ENCODE measurements at regions of chr3 and their contacts with region 1.

Region 1: DNA sequence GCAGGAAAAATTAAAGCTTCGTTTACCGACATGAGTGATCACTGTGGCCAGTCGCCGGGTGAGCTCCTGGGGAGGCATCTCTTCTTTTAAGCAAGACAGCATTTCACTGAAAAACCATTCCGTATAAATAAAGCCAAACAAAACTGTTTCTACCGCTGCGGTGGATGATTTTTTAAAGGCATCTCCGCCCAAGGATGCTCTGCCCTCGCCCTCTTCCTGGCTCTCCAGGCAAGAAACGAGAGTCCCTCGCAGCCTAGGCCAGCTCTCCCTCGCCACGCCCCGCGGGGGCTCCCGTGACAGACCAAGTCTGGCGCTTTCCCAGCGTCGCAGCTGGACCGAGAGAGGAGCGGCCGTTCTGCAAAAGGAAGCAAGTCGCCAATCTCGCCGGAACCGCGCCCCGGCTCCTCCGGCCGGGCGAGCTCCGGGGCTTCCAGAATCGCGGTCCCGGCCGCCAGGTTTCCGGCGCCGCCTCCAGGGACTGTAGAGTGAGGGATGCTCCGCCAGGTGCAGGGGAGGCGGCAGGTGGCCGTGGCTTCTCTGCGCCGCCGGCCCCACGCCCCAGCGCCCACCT is 458 bp downstream of the MCF2L2 start:
- DNase-seq: peak; percentile 24
- H3K4me3 Mint-ChIP-seq: peak overlapping the region; percentile 81
- H3K27ac Mint-ChIP-seq: peak overlapping the region; percentile 14
- H3K4me1 Mint-ChIP-seq: peaks cover 39% of the 10 kb centered on the region
- H3K27me3 Mint-ChIP-seq: peaks cover 8% of the 10 kb centered on the region

Region 2: DNA sequence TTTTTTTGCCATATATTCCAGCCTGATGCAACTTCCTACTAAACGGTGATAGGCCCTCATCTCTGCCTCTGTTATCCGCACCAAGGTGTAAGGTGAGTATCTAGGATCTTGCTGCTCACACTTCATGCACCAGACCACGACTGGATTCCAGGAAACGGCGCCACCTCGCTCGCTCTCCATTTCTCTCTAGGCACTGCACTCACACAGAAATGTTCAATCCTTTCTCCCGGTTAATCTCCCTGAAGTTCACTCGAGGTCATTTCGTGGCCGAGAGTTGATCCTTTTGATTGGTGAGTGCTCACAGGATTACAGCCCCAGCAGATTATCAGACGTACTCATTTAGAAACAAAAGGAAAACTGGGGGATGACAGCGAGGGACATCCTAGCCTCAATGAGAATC is 27.6 kb before region 1 on chr3:
- intact Hi-C with region 1: no loop called
- DNase-seq: no peak
- H3K4me3 Mint-ChIP-seq: no peak overlapping the region
- H3K27ac Mint-ChIP-seq: no peak overlapping the region
- H3K4me1 Mint-ChIP-seq: peaks cover 8% of the 10 kb centered on the region
- H3K27me3 Mint-ChIP-seq: peaks cover 2% of the 10 kb centered on the region

Region 3: DNA sequence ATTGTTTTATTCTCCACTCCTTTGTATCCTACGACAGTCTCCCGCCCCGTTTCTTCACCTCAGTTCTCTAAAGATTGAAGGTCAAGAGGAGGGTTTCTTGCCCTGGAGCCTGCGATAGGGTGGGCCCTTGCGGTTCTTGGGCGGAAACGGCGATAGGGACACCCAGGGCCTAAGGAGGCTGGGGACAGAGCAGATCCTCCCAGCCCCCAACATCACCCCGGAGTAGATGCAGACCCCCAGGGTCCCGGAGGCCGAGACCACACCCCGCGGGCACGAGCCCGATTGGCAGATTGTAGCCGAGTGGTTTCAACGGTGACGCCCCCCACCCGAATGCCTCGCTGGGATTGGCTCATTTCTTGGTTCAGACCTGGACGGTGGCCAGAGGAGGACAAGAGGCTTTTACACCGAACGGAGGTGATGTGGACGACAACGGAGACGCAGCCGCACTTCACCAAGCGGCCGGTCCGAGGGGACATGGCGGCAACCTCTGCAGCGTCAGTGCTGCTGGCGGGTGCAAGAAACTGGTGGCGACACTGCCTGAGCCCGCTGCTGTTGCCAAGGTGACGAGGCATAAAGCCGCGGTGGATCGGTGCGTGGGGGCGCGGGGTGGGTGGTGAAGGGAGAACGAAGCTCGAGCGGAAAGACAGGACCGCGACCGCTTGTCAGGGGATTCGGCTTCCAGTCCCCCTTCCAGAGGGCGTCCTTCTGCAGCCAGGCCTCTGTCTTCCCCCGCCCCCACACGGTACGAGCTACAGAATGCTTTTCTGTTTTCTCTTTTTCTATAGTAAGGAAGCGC is 19.4 kb after region 1 on chr3:
- intact Hi-C with region 1: loop called (anchors 1 kb)
- DNase-seq: peak; percentile 78
- H3K4me3 Mint-ChIP-seq: peak overlapping the region; percentile 92
- H3K27ac Mint-ChIP-seq: peak overlapping the region; percentile 83
- H3K4me1 Mint-ChIP-seq: peaks cover 17% of the 10 kb centered on the region
- H3K27me3 Mint-ChIP-seq: peaks cover 9% of the 10 kb centered on the region